Caco-2 (cell line): ENCODE measurements at regions of chr3 and their contacts with region 1.

Region 1: GRCh38 chr3:50436114-50436674 is 67.2 kb downstream of the CACNA2D2 start:
- DNase-seq: peak; percentile 43 to 67
- H3K4me3 ChIP-seq: no peak overlapping the region
- H3K4me3 Mint-ChIP-seq: no peak overlapping the region
- H3K27ac Mint-ChIP-seq: no peak overlapping the region
- H3K4me1 ChIP-seq: peaks cover 7% of the 10 kb centered on the region; the same call in 1 of the 2 replicates
- H3K4me1 Mint-ChIP-seq: peaks cover 11% of the 10 kb centered on the region
- H3K27me3 ChIP-seq: no peaks in the 10 kb centered on the region; the same call in 1 of the 2 replicates
- H3K27me3 Mint-ChIP-seq: peaks cover 9% of the 10 kb centered on the region
- CTCF ChIP-seq: peak; percentile 76 to 87

Region 2: DNA sequence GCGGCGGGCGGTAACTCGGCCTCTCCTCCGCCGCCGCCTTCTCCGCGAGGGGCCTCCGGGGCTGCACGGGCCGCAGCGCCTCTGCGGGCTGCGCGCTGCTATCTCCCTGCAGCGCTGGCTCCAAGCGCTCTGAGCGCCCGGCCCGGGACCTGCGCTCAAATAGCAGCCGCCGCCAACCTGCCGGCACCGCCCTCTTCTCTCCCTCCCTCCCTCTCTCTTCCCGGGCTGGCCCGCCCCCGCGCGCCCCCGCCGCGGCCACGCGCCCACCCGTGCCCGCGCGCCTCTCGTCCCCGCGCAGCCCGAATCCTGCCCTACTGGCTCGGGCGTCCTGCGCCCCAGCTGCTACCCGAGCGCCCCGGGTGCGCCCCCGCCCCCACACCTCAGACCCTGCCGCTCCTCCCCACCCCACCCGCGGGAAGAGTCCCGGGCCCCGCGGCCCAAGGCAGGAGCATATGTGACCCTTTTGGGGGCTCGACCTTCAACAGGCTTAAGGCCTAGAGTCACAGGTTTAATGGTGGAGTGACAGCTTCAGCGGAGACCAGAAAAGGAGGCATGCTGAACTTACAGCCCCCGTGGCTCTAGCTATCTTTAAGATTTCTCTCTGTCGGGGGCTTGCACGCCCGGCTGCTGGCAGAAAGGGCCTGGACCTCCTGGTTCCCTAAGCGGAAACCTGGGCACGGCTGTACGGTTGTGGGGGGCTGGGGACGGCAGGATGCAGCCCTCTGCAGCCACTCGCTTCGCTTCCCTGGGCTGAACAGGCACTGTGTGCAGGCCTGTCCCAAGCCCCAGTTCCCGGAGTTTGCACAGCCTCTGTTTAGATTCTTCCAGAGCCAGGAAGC is 67.5 kb after region 1 on chr3 and contains the start of gene CACNA2D2:
- CTCF ChIA-PET with region 1: no interaction called
- POLR2A ChIA-PET with region 1: no interaction called
- intact Hi-C with region 1: loop called (anchors 5 kb)
- DNase-seq: peak; percentile 55 to 64
- H3K4me3 ChIP-seq: peak within 1 kb of the TSS; percentile 27
- H3K4me3 Mint-ChIP-seq: peak within 1 kb of the TSS; percentile 51
- H3K27ac Mint-ChIP-seq: no peak within 1 kb of the TSS
- H3K4me1 ChIP-seq: 0 out of 2 replicates have a peak, but pooled peaks cover 4% of the 10 kb centered on the region
- H3K4me1 Mint-ChIP-seq: no peaks in the 10 kb centered on the region
- H3K27me3 ChIP-seq: peaks cover 4% of the 10 kb centered on the region
- H3K27me3 Mint-ChIP-seq: peaks cover 30% of the 10 kb centered on the region
- CTCF ChIP-seq: peak in 1 of 2 experiments; percentile 5
- total RNA-seq, gene CACNA2D2: 0.25 and 0.35 TPM in 2 replicates